IMR-90 (cell line): ENCODE measurements at regions of chr18 and their contacts with region 1.

Region 1: GRCh38 chr18:55589625-55590291 is 1.8 kb upstream of the TCF4 start:
- DNase-seq: peak; percentile 96
- ATAC-seq: peak; percentile 92
- H3K4me3 ChIP-seq: peak overlapping the region; percentile 78
- H3K27ac ChIP-seq: peak overlapping the region; percentile 75
- H3K4me1 ChIP-seq: peaks cover 3% of the 10 kb centered on the region
- H3K27me3 ChIP-seq: no peaks in the 10 kb centered on the region
- CTCF ChIP-seq: no peak
- POLR2A ChIP-seq: peak; percentile 88
- RAD21 ChIP-seq: no peak

Region 2: GRCh38 chr18:55100817-55101457 is 488.8 kb before region 1 on chr18:
- CTCF ChIA-PET with region 1: no interaction called
- POLR2A ChIA-PET with region 1: no interaction called
- dilution Hi-C with region 1: no loop called
- in situ Hi-C with region 1: no loop called
- intact Hi-C with region 1: no loop called
- DNase-seq: peak; percentile 54
- ATAC-seq: no peak; the same call in 1 of the 2 replicates
- H3K4me3 ChIP-seq: no peak overlapping the region
- H3K27ac ChIP-seq: no peak overlapping the region
- H3K4me1 ChIP-seq: 0 out of 2 replicates have a peak, but pooled peaks cover 2% of the 10 kb centered on the region
- H3K27me3 ChIP-seq: no peaks in the 10 kb centered on the region; the same call in 1 of the 2 replicates
- CTCF ChIP-seq: no peak
- POLR2A ChIP-seq: no peak
- RAD21 ChIP-seq: no peak

Region 3: DNA sequence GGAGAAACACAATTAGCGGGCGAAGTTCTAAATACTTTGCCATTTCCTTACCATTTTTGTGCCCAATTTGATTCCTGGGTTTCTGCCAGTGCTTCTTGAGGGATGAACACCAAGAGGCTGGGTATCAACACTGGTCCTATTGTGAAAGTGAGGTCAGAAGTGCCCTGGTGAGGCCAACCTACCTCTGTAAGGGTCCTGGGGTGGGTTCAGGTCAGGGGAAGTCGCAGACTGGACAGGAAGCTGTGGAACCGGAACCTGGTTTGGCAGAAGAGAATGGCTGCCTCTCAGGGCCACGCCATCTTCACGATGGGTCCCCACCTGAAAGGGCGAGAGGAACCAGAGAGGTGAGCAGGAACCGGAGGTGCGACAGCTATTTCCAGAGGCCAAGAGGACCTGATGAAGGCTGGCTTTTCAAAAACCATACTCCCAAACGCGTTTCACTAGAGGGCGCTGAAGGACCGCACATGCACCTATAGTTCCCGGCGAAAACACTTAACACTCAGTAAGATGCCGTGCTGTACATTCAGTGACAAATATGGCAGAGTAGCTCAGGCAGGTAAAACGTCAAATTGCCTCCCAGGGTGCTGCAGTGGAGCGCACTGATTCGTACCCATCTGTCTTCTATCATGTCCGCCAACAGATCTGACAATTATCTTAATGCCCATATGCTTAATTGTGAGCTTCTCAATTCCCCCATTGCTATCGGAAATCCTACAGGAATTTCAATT is 355.2 kb before region 1 on chr18:
- CTCF ChIA-PET with region 1: no interaction called
- POLR2A ChIA-PET with region 1: interaction called, 3 read pairs
- dilution Hi-C with region 1: no loop called
- in situ Hi-C with region 1: loop called (anchors 10 kb)
- intact Hi-C with region 1: loop called (anchors 2 kb)
- DNase-seq: peak; percentile 79
- ATAC-seq: peak; percentile 92
- H3K4me3 ChIP-seq: no peak overlapping the region
- H3K27ac ChIP-seq: no peak overlapping the region
- H3K4me1 ChIP-seq: no peaks in the 10 kb centered on the region
- H3K27me3 ChIP-seq: no peaks in the 10 kb centered on the region
- CTCF ChIP-seq: peak; percentile 88
- POLR2A ChIP-seq: no peak
- RAD21 ChIP-seq: peak; percentile 95

Region 4: GRCh38 chr18:55405893-55406406 is 183.8 kb before region 1 on chr18:
- CTCF ChIA-PET with region 1: interaction called, 3 read pairs
- POLR2A ChIA-PET with region 1: no interaction called
- dilution Hi-C with region 1: no loop called
- in situ Hi-C with region 1: no loop called
- intact Hi-C with region 1: loop called (anchors 5 kb)
- DNase-seq: peak; percentile 95
- ATAC-seq: peak; percentile 44
- H3K4me3 ChIP-seq: peak overlapping the region; percentile 9; the same call in 1 of the 2 replicates
- H3K27ac ChIP-seq: peak overlapping the region; percentile 32; the same call in 1 of the 2 replicates
- H3K4me1 ChIP-seq: peaks cover 7% of the 10 kb centered on the region
- H3K27me3 ChIP-seq: no peaks in the 10 kb centered on the region
- CTCF ChIP-seq: no peak
- POLR2A ChIP-seq: no peak
- RAD21 ChIP-seq: peak; percentile 21; the same call in 1 of the 2 replicates

Region 5: GRCh38 chr18:55422456-55423180 is 167.1 kb before region 1 on chr18:
- CTCF ChIA-PET with region 1: no interaction called
- POLR2A ChIA-PET with region 1: no interaction called
- dilution Hi-C with region 1: no loop called
- in situ Hi-C with region 1: loop called (anchors 5 kb)
- intact Hi-C with region 1: loop called (anchors 1 kb)
- DNase-seq: peak; percentile 53
- ATAC-seq: no peak
- H3K4me3 ChIP-seq: peak overlapping the region; percentile 43
- H3K27ac ChIP-seq: peak overlapping the region; percentile 78
- H3K4me1 ChIP-seq: peaks cover 12% of the 10 kb centered on the region; the same call in 1 of the 2 replicates
- H3K27me3 ChIP-seq: no peaks in the 10 kb centered on the region
- CTCF ChIP-seq: no peak
- POLR2A ChIP-seq: no peak
- RAD21 ChIP-seq: no peak

Region 6: DNA sequence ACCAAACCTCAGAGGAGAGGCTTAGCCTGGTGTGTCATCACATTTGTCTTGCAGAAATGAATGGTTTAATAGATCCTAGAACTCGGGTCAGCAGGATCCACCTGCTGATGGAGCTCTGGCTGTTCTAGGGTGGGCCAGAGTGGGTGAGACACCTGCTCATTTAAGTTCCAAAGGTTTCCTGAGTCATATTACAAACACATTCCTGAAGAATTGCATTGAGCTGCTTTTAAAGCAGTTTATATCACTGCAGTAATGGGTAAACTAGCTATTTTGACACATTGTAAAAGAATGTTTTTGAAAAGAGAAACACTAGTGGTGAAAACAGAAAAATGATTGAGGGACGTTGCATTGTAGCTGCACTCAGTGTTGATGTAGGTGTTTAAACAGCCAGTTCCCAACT is 173.5 kb after region 1 on chr18:
- CTCF ChIA-PET with region 1: no interaction called
- POLR2A ChIA-PET with region 1: no interaction called
- dilution Hi-C with region 1: no loop called
- in situ Hi-C with region 1: no loop called
- intact Hi-C with region 1: loop called (anchors 5 kb)
- DNase-seq: peak; percentile 85
- ATAC-seq: peak; percentile 90
- H3K4me3 ChIP-seq: no peak overlapping the region
- H3K27ac ChIP-seq: no peak overlapping the region
- H3K4me1 ChIP-seq: peaks cover 6% of the 10 kb centered on the region
- H3K27me3 ChIP-seq: no peaks in the 10 kb centered on the region
- CTCF ChIP-seq: no peak
- POLR2A ChIP-seq: no peak
- RAD21 ChIP-seq: no peak

Region 7: DNA sequence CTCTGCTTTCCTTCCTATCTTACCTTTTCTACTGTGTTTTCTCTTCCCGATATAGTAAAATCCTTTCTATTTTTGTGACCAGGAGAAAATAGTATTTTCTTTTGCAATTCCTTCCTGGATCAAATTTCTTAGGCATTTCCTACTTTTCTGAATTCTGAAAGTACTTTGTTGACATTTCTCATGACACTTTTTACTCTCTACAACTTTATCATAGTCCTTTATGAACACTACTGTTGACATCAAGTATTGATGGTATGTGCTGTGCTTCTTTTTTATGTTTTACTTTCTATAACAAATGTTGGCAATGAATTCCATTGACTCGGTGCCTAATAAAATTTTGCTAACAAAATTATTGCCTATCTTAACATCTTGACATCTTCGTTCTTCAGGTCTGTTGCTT is 215.9 kb after region 1 on chr18:
- CTCF ChIA-PET with region 1: no interaction called
- POLR2A ChIA-PET with region 1: no interaction called
- dilution Hi-C with region 1: no loop called
- in situ Hi-C with region 1: no loop called
- intact Hi-C with region 1: no loop called
- DNase-seq: no peak
- ATAC-seq: no peak
- H3K4me3 ChIP-seq: no peak overlapping the region
- H3K27ac ChIP-seq: no peak overlapping the region
- H3K4me1 ChIP-seq: no peaks in the 10 kb centered on the region; the same call in 1 of the 2 replicates
- H3K27me3 ChIP-seq: no peaks in the 10 kb centered on the region
- CTCF ChIP-seq: no peak
- POLR2A ChIP-seq: no peak
- RAD21 ChIP-seq: no peak

Region 8: GRCh38 chr18:55861266-55861665 is 271.5 kb after region 1 on chr18:
- CTCF ChIA-PET with region 1: no interaction called
- POLR2A ChIA-PET with region 1: no interaction called
- dilution Hi-C with region 1: no loop called
- in situ Hi-C with region 1: no loop called
- intact Hi-C with region 1: loop called (anchors 5 kb)
- DNase-seq: peak; percentile 60
- ATAC-seq: peak; percentile 59; the same call in 1 of the 2 replicates
- H3K4me3 ChIP-seq: no peak overlapping the region
- H3K27ac ChIP-seq: no peak overlapping the region
- H3K4me1 ChIP-seq: no peaks in the 10 kb centered on the region
- H3K27me3 ChIP-seq: no peaks in the 10 kb centered on the region
- CTCF ChIP-seq: peak; percentile 54
- POLR2A ChIP-seq: no peak
- RAD21 ChIP-seq: peak; percentile 58

Region 9: GRCh38 chr18:56235481-56236013 is 645.8 kb after region 1 on chr18:
- CTCF ChIA-PET with region 1: no interaction called
- POLR2A ChIA-PET with region 1: no interaction called
- dilution Hi-C with region 1: no loop called
- in situ Hi-C with region 1: no loop called
- intact Hi-C with region 1: loop called (anchors 10 kb)
- DNase-seq: no peak
- ATAC-seq: no peak
- H3K4me3 ChIP-seq: no peak overlapping the region
- H3K27ac ChIP-seq: no peak overlapping the region
- H3K4me1 ChIP-seq: peaks cover 8% of the 10 kb centered on the region
- H3K27me3 ChIP-seq: no peaks in the 10 kb centered on the region
- CTCF ChIP-seq: no peak
- POLR2A ChIP-seq: no peak
- RAD21 ChIP-seq: no peak